ENCODE measurements at regions of chr15 and their contacts with region 1.

Region 1: GRCh38 chr15:69413822-69414700 is at the start of gene KIF23:
- DNase-seq: peak; percentile 88 to 99 (median 91)
- ATAC-seq: peak; percentile 99
- H3K4me3 ChIP-seq: peak within 1 kb of the TSS; percentile 76
- H3K4me3 Mint-ChIP-seq: peak within 1 kb of the TSS; percentile 86
- H3K27ac ChIP-seq: no peak within 1 kb of the TSS
- H3K27ac Mint-ChIP-seq: peak within 1 kb of the TSS; percentile 2
- H3K4me1 ChIP-seq: peaks cover 19% of the 10 kb centered on the region
- H3K4me1 Mint-ChIP-seq: peaks cover 6% of the 10 kb centered on the region
- H3K27me3 ChIP-seq: peaks cover 0 to 8% of the 10 kb centered on the region in 2 experiments
- H3K27me3 Mint-ChIP-seq: peaks cover 18% of the 10 kb centered on the region
- CTCF ChIP-seq: no peak
- total RNA-seq, gene KIF23: 0.71 to 1.1 TPM

Region 2: DNA sequence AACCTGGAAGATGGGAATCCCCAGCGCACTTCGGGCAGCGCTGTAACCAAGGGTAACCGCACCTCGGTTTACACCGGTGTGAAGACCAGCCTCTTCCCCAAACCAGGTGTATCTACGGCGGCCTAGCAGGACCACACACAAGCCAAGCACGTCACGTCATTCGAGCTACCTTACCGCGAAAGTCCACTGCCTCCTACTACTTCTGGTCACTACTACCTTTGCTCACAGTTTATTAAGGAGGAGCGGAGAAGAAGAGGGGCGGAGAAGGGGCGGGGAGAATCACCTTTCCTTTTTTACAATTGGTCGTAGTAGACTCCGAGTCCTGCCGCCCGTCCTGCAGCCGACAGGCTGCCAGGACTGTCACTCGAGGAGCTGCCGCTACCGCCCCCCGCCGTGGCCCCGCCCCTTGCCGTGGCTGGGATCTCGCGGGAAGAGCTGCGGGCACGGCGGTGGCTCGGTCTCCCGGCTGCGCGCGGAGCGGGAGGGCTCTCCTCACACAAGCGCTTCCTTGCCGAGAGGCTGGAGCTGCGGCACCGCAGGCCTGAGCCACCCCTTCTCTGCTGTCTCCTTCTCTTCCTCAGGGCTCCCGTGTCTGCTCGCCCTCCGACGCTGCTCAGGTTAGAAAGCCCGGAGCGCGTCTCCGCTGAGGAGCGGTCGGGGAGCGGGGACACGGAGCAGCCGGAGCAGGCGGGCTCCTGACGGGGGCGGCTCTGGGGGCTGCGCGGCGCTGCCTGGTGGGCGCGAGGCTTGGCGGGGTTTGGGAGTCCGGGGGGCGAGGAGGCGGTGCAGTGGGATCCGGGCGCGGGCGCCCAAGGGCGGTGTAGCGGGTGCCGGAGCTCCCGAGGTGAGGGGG is 253.7 kb before region 1 on chr15 and contains the start of gene GLCE:
- CTCF ChIA-PET with region 1: no interaction called
- POLR2A ChIA-PET with region 1: interaction called, 3 read pairs
- intact Hi-C with region 1: loop called in 1 of 2 experiments (anchors 1 kb)
- DNase-seq: peak; percentile 82 to 97 (median 92)
- ATAC-seq: peak; percentile 94
- H3K4me3 ChIP-seq: peak within 1 kb of the TSS; percentile 85
- H3K4me3 Mint-ChIP-seq: peak within 1 kb of the TSS; percentile 99
- H3K27ac ChIP-seq: peak within 1 kb of the TSS; percentile 18 to 60
- H3K27ac Mint-ChIP-seq: peak within 1 kb of the TSS; percentile 81
- H3K4me1 ChIP-seq: peaks cover 17% of the 10 kb centered on the region
- H3K4me1 Mint-ChIP-seq: peaks cover 17% of the 10 kb centered on the region
- H3K27me3 ChIP-seq: no peaks in the 10 kb centered on the region
- H3K27me3 Mint-ChIP-seq: no peaks in the 10 kb centered on the region
- CTCF ChIP-seq: no peak
- total RNA-seq, gene GLCE: 3.2 TPM

Region 3: GRCh38 chr15:69394556-69395282 is 19.3 kb before region 1 on chr15:
- CTCF ChIA-PET with region 1: interaction called, 10 read pairs
- POLR2A ChIA-PET with region 1: no interaction called
- intact Hi-C with region 1: no loop called
- DNase-seq: peak; percentile 58 to 88 (median 82)
- ATAC-seq: peak; percentile 95
- H3K4me3 ChIP-seq: no peak overlapping the region
- H3K4me3 Mint-ChIP-seq: no peak overlapping the region
- H3K27ac ChIP-seq: no peak overlapping the region
- H3K27ac Mint-ChIP-seq: no peak overlapping the region
- H3K4me1 ChIP-seq: peaks cover 11% of the 10 kb centered on the region
- H3K4me1 Mint-ChIP-seq: peaks cover 8% of the 10 kb centered on the region
- H3K27me3 ChIP-seq: no peaks in the 10 kb centered on the region
- H3K27me3 Mint-ChIP-seq: no peaks in the 10 kb centered on the region
- CTCF ChIP-seq: peak; percentile 96

Region 4: GRCh38 chr15:69462493-69463181 is 48.6 kb after region 1 on chr15:
- CTCF ChIA-PET with region 1: interaction called, 9 read pairs
- POLR2A ChIA-PET with region 1: interaction called, 9 read pairs
- intact Hi-C with region 1: loop called in 1 of 2 experiments (anchors 2 kb)
- DNase-seq: peak; percentile 84 to 96 (median 90)
- ATAC-seq: peak; percentile 94
- H3K4me3 ChIP-seq: peak overlapping the region; percentile 81
- H3K4me3 Mint-ChIP-seq: peak overlapping the region; percentile 94
- H3K27ac ChIP-seq: peak overlapping the region; percentile 55 to 71
- H3K27ac Mint-ChIP-seq: peak overlapping the region; percentile 90
- H3K4me1 ChIP-seq: peaks cover 41% of the 10 kb centered on the region
- H3K4me1 Mint-ChIP-seq: peaks cover 37% of the 10 kb centered on the region
- H3K27me3 ChIP-seq: no peaks in the 10 kb centered on the region
- H3K27me3 Mint-ChIP-seq: no peaks in the 10 kb centered on the region
- CTCF ChIP-seq: peak; percentile 86